Dendritic cell treated with granulocyte-macrophage colony-stimulating factor and Interleukin-4, amounts not matched to agents 40 ng/mL and 50 ng/mL, for 4 days (primary cell): ENCODE measurements at regions of chr1 and their contacts with region 1.

Region 1: DNA sequence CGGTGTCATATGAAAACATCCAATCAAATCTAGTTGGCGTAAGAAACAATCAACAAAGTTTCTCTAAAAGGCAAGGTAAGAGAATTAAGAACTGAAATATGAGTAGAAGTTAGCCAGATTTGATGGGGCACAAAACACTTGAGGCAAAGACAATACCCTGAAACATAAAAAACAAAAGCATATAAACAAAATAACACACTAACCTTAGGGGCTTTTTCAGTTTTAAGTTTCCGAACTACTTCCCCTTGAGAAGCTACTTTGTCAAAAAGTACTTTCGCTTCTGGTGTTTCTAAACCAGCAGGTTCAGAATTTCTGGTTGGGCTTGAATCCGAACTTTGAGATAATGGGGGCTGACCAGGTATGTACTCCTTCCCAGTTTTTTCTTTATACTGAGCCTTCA is 57.9 kb downstream of the EPRS1 start:
- H3K4me3 Mint-ChIP-seq: no peak overlapping the region
- H3K27ac Mint-ChIP-seq: no peak overlapping the region
- H3K4me1 Mint-ChIP-seq: no peaks in the 10 kb centered on the region
- H3K27me3 Mint-ChIP-seq: no peaks in the 10 kb centered on the region

Region 2: DNA sequence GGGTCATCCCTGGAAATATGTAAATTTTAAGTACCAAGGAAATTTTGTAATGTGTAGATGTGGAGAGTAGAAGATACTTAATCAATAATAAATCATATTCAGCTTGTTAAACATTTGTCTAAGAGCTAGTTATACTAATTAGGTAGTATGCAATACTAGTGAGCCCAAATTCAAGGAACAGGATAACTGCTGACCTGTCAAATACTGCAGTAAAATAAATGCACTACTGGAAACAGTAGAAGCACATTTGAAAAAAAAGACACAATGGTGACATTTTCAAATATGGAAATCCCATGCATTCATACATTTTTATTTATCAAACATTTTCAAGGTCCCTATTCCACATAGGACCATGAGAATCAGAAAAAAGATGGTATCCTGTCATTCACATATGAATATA is 30.7 kb after region 1 on chr1:
- intact Hi-C with region 1: loop called (anchors 5 kb)
- H3K4me3 Mint-ChIP-seq: no peak overlapping the region
- H3K27ac Mint-ChIP-seq: no peak overlapping the region
- H3K4me1 Mint-ChIP-seq: no peaks in the 10 kb centered on the region
- H3K27me3 Mint-ChIP-seq: no peaks in the 10 kb centered on the region